ENCODE measurements at regions of chr18 and their contacts with region 1.

Region 1: DNA sequence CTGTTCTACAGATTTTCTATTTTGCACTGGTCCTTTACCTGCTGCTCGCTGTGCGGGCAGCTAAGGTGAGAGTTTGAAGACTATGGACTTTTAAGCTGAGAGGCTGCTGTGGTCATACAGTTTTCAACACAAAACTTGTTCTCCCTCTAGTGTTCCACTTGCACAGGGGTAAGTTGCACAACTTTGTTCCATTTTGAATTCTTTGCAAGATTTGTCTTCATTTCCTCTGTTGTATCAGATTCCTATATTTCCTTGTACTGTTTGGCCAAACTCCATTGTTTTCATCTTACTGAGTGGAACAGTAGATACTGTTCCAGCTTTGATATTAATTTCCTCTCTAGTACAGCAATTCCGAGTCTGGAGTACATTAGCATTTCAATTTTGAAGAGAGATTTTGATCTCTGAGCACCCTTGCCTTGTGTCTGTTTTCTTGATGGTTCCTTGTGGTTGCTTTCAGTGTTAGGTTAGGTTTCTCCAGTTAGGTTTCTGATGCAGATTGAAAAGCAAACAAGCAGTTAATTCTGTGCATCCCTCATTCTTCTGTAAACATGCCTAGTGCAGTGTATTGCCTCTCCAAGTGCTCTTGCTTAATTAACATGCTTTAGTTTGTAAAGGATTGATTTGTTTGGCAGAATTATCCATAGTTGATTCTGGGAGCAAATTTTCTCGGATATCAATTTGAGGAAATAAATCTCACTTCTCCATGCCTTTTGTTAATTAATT is 188.8 kb downstream of the PTPRM start:
- DNase-seq: no peak
- ATAC-seq: peak; percentile 59 to 76
- H3K4me3 ChIP-seq: no peak overlapping the region
- H3K27ac ChIP-seq: peak overlapping the region in 1 of 4 donors; percentile 21
- H3K4me1 ChIP-seq: peaks cover 52 to 70% of the 10 kb centered on the region in 2 donors
- H3K27me3 ChIP-seq: no peaks in the 10 kb centered on the region
- CTCF ChIP-seq: peak in 3 of 5 experiments; percentile 19 to 41 (median 37)
- POLR2A ChIP-seq: no peak

Region 2: DNA sequence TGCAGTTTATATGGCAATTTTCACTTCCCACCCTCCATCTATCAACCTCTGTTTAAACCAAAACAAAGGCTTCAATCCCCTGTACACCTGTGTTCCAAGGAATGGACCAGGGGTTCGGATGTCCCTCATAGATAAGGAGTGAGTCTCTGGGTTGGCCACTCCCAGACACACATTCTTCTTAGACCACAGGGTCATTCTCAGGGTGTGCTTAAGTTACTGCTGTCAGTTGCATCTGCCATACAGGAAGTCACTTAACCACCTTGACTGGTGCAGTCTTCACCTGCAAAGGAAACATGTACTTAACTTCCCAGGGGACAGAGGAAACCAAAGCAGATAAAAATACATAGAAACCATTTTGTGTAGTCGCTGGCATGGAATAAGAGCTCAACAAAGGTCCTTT is 1195.6 kb after region 1 on chr18:
- in situ Hi-C with region 1: no loop called
- intact Hi-C with region 1: loop called (anchors 10 kb)
- DNase-seq: no peak
- ATAC-seq: no peak
- H3K4me3 ChIP-seq: no peak overlapping the region
- H3K27ac ChIP-seq: no peak overlapping the region
- H3K4me1 ChIP-seq: no peaks in the 10 kb centered on the region
- H3K27me3 ChIP-seq: peaks cover 0 to 7% (median 0%) of the 10 kb centered on the region in 3 donors
- CTCF ChIP-seq: no peak
- POLR2A ChIP-seq: no peak

Measured in gastrocnemius medialis (tissue), 4 donors.